B cell (primary cell): ENCODE measurements at regions of chr5 and their contacts with region 1.

Region 1: GRCh38 chr5:14270209-14270702 is 127.1 kb downstream of the TRIO start:
- DNase-seq: peak; percentile 70
- ATAC-seq: peak; percentile 65
- H3K4me3 ChIP-seq: no peak overlapping the region
- H3K4me3 Mint-ChIP-seq: no peak overlapping the region
- H3K27ac ChIP-seq: no peak overlapping the region
- H3K27ac Mint-ChIP-seq: no peak overlapping the region
- H3K4me1 ChIP-seq: peaks cover 7 to 8% of the 10 kb centered on the region in 2 donors
- H3K4me1 Mint-ChIP-seq: peaks cover 62% of the 10 kb centered on the region
- H3K27me3 ChIP-seq: no peaks in the 10 kb centered on the region
- H3K27me3 Mint-ChIP-seq: no peaks in the 10 kb centered on the region
- CTCF ChIP-seq: peak; percentile 87

Region 2: DNA sequence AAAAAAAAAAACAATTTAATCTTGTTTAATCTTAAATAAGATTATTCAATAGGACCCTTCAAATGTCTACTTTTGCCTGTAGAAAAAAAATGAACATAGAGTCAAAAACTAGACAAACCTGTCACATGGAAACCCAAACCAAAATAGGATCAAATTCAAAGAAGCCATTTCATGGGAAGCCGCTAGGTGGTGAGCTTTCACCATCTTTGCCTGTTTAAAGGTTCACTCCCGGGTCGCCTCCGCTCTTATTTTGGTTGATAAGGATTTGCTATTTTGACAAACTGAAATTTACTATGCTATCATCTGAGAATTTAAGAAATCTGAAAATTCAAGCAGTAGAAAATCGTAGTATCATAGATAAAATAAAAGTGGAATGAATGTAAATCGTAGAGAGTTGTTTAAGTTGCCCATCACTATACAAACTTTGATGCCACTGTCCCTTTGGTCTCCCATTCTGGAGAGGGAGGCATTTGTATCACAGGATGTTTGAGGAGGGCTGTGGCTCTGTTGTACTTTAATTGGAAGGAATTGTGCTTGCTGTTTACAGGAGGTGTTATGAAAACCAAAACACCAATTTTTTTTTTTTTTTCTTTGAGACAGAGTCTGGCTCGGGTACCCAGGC is 282.3 kb before region 1 on chr5:
- CTCF ChIA-PET with region 1: interaction called, 24 read pairs
- POLR2A ChIA-PET with region 1: no interaction called
- intact Hi-C with region 1: loop called (anchors 1 kb)
- DNase-seq: peak; percentile 65
- ATAC-seq: no peak
- H3K4me3 ChIP-seq: no peak overlapping the region
- H3K4me3 Mint-ChIP-seq: no peak overlapping the region
- H3K27ac ChIP-seq: no peak overlapping the region
- H3K27ac Mint-ChIP-seq: no peak overlapping the region
- H3K4me1 ChIP-seq: no peaks in the 10 kb centered on the region
- H3K4me1 Mint-ChIP-seq: peaks cover 2% of the 10 kb centered on the region
- H3K27me3 ChIP-seq: no peaks in the 10 kb centered on the region
- H3K27me3 Mint-ChIP-seq: peaks cover 17% of the 10 kb centered on the region
- CTCF ChIP-seq: peak; percentile 83

Region 3: GRCh38 chr5:14148890-14149671 is 121.2 kb before region 1 on chr5:
- CTCF ChIA-PET with region 1: interaction called, 64 read pairs
- POLR2A ChIA-PET with region 1: no interaction called
- intact Hi-C with region 1: loop called (anchors 1 kb)
- DNase-seq: peak; percentile 32
- ATAC-seq: no peak
- H3K4me3 ChIP-seq: peak overlapping the region in 2 of 5 experiments; percentile 14 to 15
- H3K4me3 Mint-ChIP-seq: peak overlapping the region; percentile 73
- H3K27ac ChIP-seq: peak overlapping the region; percentile 14 to 27
- H3K27ac Mint-ChIP-seq: peak overlapping the region; percentile 74
- H3K4me1 ChIP-seq: peaks cover 71 to 75% of the 10 kb centered on the region in 2 donors
- H3K4me1 Mint-ChIP-seq: peaks cover 73% of the 10 kb centered on the region
- H3K27me3 ChIP-seq: no peaks in the 10 kb centered on the region
- H3K27me3 Mint-ChIP-seq: no peaks in the 10 kb centered on the region
- CTCF ChIP-seq: no peak

Region 4: GRCh38 chr5:14258840-14259239 is 11.4 kb before region 1 on chr5:
- CTCF ChIA-PET with region 1: interaction called, 25 read pairs
- POLR2A ChIA-PET with region 1: no interaction called
- intact Hi-C with region 1: no loop called
- DNase-seq: peak; percentile 37
- ATAC-seq: peak; percentile 35
- H3K4me3 ChIP-seq: no peak overlapping the region
- H3K4me3 Mint-ChIP-seq: peak overlapping the region; percentile 48
- H3K27ac ChIP-seq: no peak overlapping the region
- H3K27ac Mint-ChIP-seq: peak overlapping the region; percentile 79
- H3K4me1 ChIP-seq: peaks cover 25 to 35% of the 10 kb centered on the region in 2 donors
- H3K4me1 Mint-ChIP-seq: peaks cover 77% of the 10 kb centered on the region
- H3K27me3 ChIP-seq: no peaks in the 10 kb centered on the region
- H3K27me3 Mint-ChIP-seq: no peaks in the 10 kb centered on the region
- CTCF ChIP-seq: peak; percentile 17

Region 5: DNA sequence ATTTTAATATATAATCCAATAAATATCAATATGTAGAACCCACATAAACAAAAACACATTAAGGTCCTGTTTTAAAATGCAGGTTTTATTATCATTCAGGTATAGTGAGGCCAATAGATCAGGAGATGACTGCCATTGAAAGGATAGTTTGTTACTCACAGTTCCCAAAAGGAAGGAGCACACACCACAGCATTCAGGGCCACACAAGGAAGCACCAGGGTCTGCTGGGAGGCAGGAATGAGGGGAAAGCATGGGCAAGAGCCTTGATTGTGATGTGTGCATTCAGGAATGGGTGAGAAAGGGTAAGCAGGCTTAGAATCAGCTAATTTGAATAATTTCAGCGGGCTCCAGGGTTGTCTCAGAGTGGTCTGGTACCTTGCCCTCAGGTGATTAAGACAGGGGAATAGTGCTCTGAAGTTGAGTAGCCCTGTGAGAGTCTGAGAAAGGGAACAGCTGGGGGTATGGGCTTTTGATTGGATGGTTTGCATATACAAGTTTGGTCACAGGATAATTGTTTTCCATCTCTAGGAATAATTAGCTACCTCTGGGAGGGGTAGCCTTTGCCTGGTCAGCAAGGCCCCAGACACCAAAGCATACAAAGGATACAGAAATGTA is 374.5 kb after region 1 on chr5:
- CTCF ChIA-PET with region 1: interaction called, 6 read pairs
- POLR2A ChIA-PET with region 1: no interaction called
- intact Hi-C with region 1: loop called (anchors 1 kb)
- DNase-seq: no peak
- ATAC-seq: no peak
- H3K4me3 ChIP-seq: no peak overlapping the region
- H3K4me3 Mint-ChIP-seq: no peak overlapping the region
- H3K27ac ChIP-seq: no peak overlapping the region
- H3K27ac Mint-ChIP-seq: no peak overlapping the region
- H3K4me1 ChIP-seq: no peaks in the 10 kb centered on the region
- H3K4me1 Mint-ChIP-seq: no peaks in the 10 kb centered on the region
- H3K27me3 ChIP-seq: peaks cover 0 to 5% (median 0%) of the 10 kb centered on the region in 4 experiments
- H3K27me3 Mint-ChIP-seq: peaks cover 38% of the 10 kb centered on the region
- CTCF ChIP-seq: no peak

Region 6: GRCh38 chr5:14696057-14696456 is 425.8 kb after region 1 on chr5:
- CTCF ChIA-PET with region 1: no interaction called
- POLR2A ChIA-PET with region 1: no interaction called
- intact Hi-C with region 1: no loop called
- DNase-seq: no peak
- ATAC-seq: no peak
- H3K4me3 ChIP-seq: no peak overlapping the region
- H3K4me3 Mint-ChIP-seq: no peak overlapping the region
- H3K27ac ChIP-seq: no peak overlapping the region
- H3K27ac Mint-ChIP-seq: no peak overlapping the region
- H3K4me1 ChIP-seq: peaks cover 0 to 5% of the 10 kb centered on the region in 2 donors
- H3K4me1 Mint-ChIP-seq: peaks cover 3% of the 10 kb centered on the region
- H3K27me3 ChIP-seq: no peaks in the 10 kb centered on the region
- H3K27me3 Mint-ChIP-seq: no peaks in the 10 kb centered on the region
- CTCF ChIP-seq: no peak